Common myeloid progenitor, CD34-positive (primary cell): ENCODE measurements at regions of chr1 and their contacts with region 1.

Region 1: DNA sequence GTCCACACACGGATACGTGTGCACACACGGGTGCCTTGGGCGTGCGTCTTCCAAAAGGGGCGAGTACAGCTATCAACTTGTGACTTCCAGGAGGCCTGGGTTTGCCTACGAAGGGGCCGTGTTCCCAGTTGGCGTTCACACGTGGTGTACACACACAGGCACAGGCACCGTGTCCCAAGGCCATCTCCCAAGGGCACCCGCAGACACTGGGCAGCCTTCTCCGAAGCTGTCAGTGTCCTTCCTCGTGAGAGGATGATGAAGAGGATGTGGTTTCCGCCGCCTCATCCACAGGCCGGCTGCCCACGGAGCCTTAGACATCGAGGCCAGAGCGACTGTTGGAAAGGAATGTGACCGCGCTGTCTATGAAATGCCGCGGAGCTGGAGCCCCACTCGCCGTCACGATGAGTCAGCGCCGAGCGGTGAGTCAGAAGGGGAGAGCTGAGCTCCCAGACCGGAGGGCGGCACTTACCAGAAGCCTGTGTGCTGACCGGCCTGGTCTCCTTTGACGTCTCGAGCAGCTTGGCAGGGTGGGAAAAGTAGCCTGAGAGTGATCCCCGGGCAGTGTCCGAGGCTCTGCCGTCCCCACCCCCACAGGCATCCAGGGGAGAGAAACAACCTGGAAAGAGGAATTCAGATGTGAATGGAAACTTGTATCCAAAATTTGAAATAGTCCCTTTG is 141.4 kb upstream of the ARHGEF16 start:
- DNase-seq: peak; percentile 87 to 96 (median 93)
- H3K4me3 ChIP-seq: no peak overlapping the region
- H3K27ac ChIP-seq: peak overlapping the region in 1 of 2 experiments; percentile 81
- H3K4me1 ChIP-seq: peaks cover 0 to 33% (median 27%) of the 10 kb centered on the region in 4 experiments
- H3K27me3 ChIP-seq: no peaks in the 10 kb centered on the region

Region 2: DNA sequence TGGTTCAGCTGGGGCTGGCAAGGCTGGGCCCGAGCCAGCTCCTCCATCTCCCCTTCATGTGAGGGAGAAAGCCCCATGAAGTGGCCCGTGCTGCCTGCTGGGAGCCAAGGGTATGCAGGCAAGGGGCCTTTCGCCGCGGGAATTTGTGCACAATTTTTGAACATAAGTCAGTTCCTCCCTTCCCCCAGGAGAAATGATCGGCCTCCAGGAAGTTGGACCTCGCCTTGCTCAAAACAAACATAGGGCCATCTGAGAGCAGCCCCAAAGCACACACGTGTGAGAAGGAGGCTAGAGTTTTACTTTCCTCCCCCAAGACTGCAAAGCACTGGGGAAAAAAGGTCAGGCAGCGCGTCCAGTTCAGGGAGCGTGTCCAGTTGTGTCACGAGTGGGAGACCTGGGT is 179.4 kb before region 1 on chr1:
- CTCF ChIA-PET with region 1: no interaction called
- POLR2A ChIA-PET with region 1: no interaction called
- DNase-seq: no peak
- H3K4me3 ChIP-seq: no peak overlapping the region
- H3K27ac ChIP-seq: no peak overlapping the region
- H3K4me1 ChIP-seq: peaks cover 0 to 47% (median 19%) of the 10 kb centered on the region in 4 experiments
- H3K27me3 ChIP-seq: no peaks in the 10 kb centered on the region

Region 3: GRCh38 chr1:3145532-3146325 is 167.3 kb before region 1 on chr1:
- CTCF ChIA-PET with region 1: no interaction called
- POLR2A ChIA-PET with region 1: no interaction called
- DNase-seq: no peak
- H3K4me3 ChIP-seq: no peak overlapping the region
- H3K27ac ChIP-seq: no peak overlapping the region
- H3K4me1 ChIP-seq: peaks cover 0 to 14% (median 9%) of the 10 kb centered on the region in 4 experiments
- H3K27me3 ChIP-seq: no peaks in the 10 kb centered on the region

Region 4: GRCh38 chr1:3298197-3298596 is 14.8 kb before region 1 on chr1:
- CTCF ChIA-PET with region 1: no interaction called
- POLR2A ChIA-PET with region 1: no interaction called
- DNase-seq: no peak
- H3K4me3 ChIP-seq: no peak overlapping the region
- H3K27ac ChIP-seq: no peak overlapping the region
- H3K4me1 ChIP-seq: peaks cover 0 to 5% (median 0%) of the 10 kb centered on the region in 4 experiments
- H3K27me3 ChIP-seq: no peaks in the 10 kb centered on the region

Region 5: DNA sequence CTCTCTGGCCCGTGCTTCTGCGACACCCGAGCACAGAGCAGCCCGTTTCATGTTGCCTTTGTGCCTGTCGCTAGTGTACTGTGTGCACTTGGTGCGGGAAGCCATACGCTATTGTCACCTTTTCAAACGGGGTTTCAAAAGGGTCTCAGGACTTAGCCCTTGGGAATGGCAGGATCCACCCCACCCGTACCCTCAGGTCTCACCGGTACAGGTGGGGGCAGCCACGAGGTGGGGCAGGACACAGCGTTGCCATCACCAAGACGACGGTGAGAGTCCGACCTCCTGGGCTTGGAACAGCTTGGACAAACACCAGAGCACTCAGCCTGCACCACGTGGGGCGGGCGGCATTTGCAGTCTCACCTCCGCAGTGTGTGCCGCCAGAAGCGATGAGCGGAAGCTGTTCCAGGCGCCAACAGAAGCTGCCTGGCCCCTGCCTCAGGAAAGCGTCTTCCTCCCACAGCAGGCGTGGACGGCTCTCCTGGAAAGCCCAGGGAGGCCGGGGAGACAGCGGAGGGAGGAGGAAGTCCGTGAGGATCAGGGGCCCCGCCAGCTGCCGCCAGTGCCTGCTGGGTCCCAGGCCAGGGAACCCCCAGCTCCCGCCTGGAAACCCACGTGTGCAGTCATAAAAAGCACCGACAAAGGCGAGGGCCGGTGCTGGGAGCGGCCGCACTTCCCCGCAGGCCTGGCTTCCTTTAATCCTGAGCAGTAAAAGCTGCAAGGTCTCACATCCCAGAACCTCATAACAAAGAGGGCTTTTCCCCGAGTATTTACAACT is 10.2 kb after region 1 on chr1:
- CTCF ChIA-PET with region 1: interaction called, 6 read pairs
- POLR2A ChIA-PET with region 1: interaction called, 11 read pairs
- DNase-seq: peak in 2 of 3 donors; percentile 46 to 55
- H3K4me3 ChIP-seq: no peak overlapping the region
- H3K27ac ChIP-seq: no peak overlapping the region
- H3K4me1 ChIP-seq: peaks cover 0 to 55% (median 31%) of the 10 kb centered on the region in 4 experiments
- H3K27me3 ChIP-seq: no peaks in the 10 kb centered on the region

Region 6: GRCh38 chr1:3384407-3384806 is 71.4 kb after region 1 on chr1:
- CTCF ChIA-PET with region 1: no interaction called
- POLR2A ChIA-PET with region 1: no interaction called
- DNase-seq: no peak
- H3K4me3 ChIP-seq: no peak overlapping the region
- H3K27ac ChIP-seq: no peak overlapping the region
- H3K4me1 ChIP-seq: peaks cover 0 to 25% (median 9%) of the 10 kb centered on the region in 4 experiments
- H3K27me3 ChIP-seq: no peaks in the 10 kb centered on the region